ENCODE measurements at regions of chr10 and their contacts with region 1.

Region 1: DNA sequence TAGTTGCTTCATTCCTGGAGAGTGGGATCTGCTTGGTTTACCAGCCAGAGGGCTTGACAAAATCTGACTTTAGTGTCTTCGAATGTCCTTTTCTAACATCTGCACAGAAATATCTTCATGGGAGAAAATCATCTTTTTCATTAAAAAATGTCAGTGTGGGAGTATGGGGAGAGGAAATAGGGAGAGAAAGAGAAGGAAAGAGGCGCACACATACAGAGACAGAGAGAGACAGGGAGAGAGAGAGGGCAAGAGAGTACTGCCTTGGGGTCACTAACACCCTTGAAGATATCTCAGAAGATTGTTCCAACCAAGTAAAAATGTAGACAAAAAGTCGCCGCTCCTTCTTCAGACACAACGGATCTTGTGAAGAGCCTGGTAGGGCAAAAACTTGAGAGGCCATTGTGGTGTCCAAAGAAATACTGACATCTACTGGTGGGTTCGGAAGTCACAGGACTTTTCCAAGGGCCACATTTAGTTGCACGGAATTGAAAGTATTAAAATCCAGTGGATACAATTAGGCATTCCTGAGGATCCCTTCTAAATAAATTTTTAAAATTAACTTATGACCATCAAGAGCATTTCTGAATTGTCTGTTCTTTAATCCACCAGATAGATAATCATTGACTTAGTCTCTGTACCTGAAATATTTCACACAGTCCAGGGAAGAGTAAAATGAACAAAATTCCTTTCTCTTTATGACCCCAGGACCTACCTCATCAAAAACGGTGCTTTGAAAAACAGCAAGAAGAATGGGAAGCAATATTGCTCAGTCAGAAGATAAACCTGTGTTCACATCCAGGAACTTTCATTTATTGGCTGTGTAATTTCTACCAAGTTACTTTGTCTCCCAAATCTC is 29.7 kb downstream of the VIM start:
- DNase-seq: peak; percentile 56 to 75
- H3K4me3 ChIP-seq: no peak overlapping the region
- H3K4me3 Mint-ChIP-seq: peak overlapping the region; percentile 24
- H3K27ac Mint-ChIP-seq: no peak overlapping the region
- H3K4me1 ChIP-seq: no peaks in the 10 kb centered on the region
- H3K4me1 Mint-ChIP-seq: peaks cover 6% of the 10 kb centered on the region
- H3K27me3 ChIP-seq: no peaks in the 10 kb centered on the region
- H3K27me3 Mint-ChIP-seq: peaks cover 3% of the 10 kb centered on the region
- CTCF ChIP-seq: peak; percentile 88 to 93

Region 2: DNA sequence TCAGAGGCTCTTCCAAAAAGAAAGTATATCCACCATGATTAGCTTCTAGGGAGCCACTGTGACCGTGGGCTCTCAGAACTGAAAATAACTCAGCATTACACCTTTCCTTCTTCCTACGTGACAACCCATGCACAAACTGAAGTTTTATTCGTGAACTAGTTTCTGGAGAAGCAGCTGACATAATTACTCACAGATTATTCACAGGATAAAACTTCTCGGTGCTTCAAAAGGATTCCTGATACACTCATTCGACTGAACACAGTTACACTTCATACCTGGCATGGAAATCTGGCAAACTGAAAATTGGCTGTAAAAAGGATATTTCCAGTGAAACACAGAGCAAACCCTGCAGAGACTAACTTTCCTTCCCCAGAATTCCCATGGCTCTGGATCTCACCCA is 960.0 kb before region 1 on chr10:
- CTCF ChIA-PET with region 1: no interaction called
- POLR2A ChIA-PET with region 1: no interaction called
- intact Hi-C with region 1: no loop called
- DNase-seq: no peak
- H3K4me3 ChIP-seq: no peak overlapping the region
- H3K4me3 Mint-ChIP-seq: no peak overlapping the region
- H3K27ac Mint-ChIP-seq: no peak overlapping the region
- H3K4me1 ChIP-seq: no peaks in the 10 kb centered on the region
- H3K4me1 Mint-ChIP-seq: no peaks in the 10 kb centered on the region
- H3K27me3 ChIP-seq: no peaks in the 10 kb centered on the region; the same call in 1 of the 2 replicates
- H3K27me3 Mint-ChIP-seq: peaks cover 12% of the 10 kb centered on the region
- CTCF ChIP-seq: no peak

Region 3: GRCh38 chr10:16828114-16828568 is 429.6 kb before region 1 on chr10:
- CTCF ChIA-PET with region 1: no interaction called
- POLR2A ChIA-PET with region 1: no interaction called
- intact Hi-C with region 1: loop called (anchors 1 kb)
- DNase-seq: peak; percentile 66 to 75
- H3K4me3 ChIP-seq: no peak overlapping the region
- H3K4me3 Mint-ChIP-seq: no peak overlapping the region
- H3K27ac Mint-ChIP-seq: no peak overlapping the region
- H3K4me1 ChIP-seq: no peaks in the 10 kb centered on the region
- H3K4me1 Mint-ChIP-seq: no peaks in the 10 kb centered on the region
- H3K27me3 ChIP-seq: no peaks in the 10 kb centered on the region
- H3K27me3 Mint-ChIP-seq: peaks cover 3% of the 10 kb centered on the region
- CTCF ChIP-seq: peak; percentile 63 to 78

Region 4: GRCh38 chr10:16843252-16843870 is 414.3 kb before region 1 on chr10:
- CTCF ChIA-PET with region 1: no interaction called
- POLR2A ChIA-PET with region 1: no interaction called
- intact Hi-C with region 1: loop called (anchors 1 kb)
- DNase-seq: peak in 1 of 2 experiments; percentile 69
- H3K4me3 ChIP-seq: no peak overlapping the region
- H3K4me3 Mint-ChIP-seq: no peak overlapping the region
- H3K27ac Mint-ChIP-seq: no peak overlapping the region
- H3K4me1 ChIP-seq: no peaks in the 10 kb centered on the region
- H3K4me1 Mint-ChIP-seq: no peaks in the 10 kb centered on the region
- H3K27me3 ChIP-seq: no peaks in the 10 kb centered on the region; the same call in 1 of the 2 replicates
- H3K27me3 Mint-ChIP-seq: peaks cover 9% of the 10 kb centered on the region
- CTCF ChIP-seq: peak; percentile 58 to 81

Region 5: DNA sequence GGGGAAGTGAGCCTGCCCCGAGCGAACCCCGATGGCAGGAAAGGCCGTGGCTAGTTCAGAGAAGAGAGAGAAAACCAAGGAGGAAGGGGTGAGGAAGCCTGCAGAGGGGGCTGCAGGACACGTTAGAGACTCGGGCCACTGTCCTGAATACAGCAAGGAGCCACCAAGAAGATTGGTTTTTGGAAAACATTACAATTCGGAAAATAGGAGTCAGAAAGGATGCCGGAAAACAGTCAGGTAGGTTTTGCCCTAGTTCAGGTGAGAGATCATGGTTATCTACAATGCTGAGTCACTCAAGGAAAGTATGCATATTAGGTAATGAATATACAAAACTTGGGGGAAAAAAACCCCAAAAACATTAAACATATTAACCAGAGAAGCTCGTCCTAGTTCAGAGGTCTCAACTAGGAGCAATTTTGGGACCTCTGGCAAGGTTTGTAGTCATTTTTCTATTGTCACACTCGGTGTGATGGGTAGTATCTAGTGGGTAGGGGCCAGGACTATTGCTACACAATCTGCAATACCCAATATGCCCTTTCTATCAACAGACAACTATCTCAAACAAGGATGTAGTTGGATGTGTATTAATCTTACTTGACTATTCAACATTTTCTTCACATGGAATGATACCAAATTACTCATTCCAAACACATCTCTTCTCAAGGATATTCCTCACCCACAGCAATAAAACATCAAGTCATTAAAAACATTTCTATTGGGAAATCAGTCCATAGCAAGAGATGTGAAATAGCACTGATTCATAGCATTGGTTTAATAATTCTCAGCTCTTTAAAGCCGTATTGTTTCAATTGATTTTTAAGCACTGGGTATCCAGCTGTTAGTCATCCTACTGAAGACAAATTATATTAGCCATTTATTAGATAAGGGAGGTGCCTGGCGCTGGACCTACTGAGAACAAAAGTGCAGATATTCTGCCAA is 366.1 kb before region 1 on chr10:
- CTCF ChIA-PET with region 1: no interaction called
- POLR2A ChIA-PET with region 1: no interaction called
- intact Hi-C with region 1: loop called (anchors 1 kb)
- DNase-seq: peak; percentile 56 to 66
- H3K4me3 ChIP-seq: no peak overlapping the region
- H3K4me3 Mint-ChIP-seq: peak overlapping the region; percentile 60
- H3K27ac Mint-ChIP-seq: peak overlapping the region; percentile 86
- H3K4me1 ChIP-seq: no peaks in the 10 kb centered on the region
- H3K4me1 Mint-ChIP-seq: peaks cover 7% of the 10 kb centered on the region
- H3K27me3 ChIP-seq: no peaks in the 10 kb centered on the region
- H3K27me3 Mint-ChIP-seq: peaks cover 9% of the 10 kb centered on the region
- CTCF ChIP-seq: peak; percentile 26 to 73

Region 6: DNA sequence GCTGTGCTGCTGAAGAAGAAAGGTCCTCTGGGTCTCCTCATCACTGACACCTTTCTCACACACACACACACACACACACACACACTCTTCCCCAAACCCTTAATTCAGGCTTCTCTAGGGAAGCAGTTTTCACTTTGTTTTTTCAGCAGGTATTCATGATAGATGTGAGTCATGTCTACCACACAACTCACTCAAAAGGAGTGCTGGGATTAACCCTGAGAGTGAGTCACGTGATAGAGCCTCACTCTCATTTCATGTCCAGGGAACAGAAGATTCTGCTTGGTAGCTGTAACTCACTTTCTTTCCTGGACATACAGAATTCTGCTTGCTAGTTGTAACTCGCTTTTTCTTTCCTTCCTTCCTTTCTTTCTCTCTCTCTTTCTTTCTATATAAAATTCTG is 15.7 kb after region 1 on chr10:
- CTCF ChIA-PET with region 1: no interaction called
- POLR2A ChIA-PET with region 1: no interaction called
- intact Hi-C with region 1: no loop called
- DNase-seq: no peak
- H3K4me3 ChIP-seq: no peak overlapping the region
- H3K4me3 Mint-ChIP-seq: no peak overlapping the region
- H3K27ac Mint-ChIP-seq: no peak overlapping the region
- H3K4me1 ChIP-seq: no peaks in the 10 kb centered on the region
- H3K4me1 Mint-ChIP-seq: peaks cover 4% of the 10 kb centered on the region
- H3K27me3 ChIP-seq: no peaks in the 10 kb centered on the region
- H3K27me3 Mint-ChIP-seq: no peaks in the 10 kb centered on the region
- CTCF ChIP-seq: no peak

Measured in Caco-2 (cell line).